CD8-positive, alpha-beta T cell (primary cell): ENCODE measurements at regions of chr3 and their contacts with region 1.

Region 1: DNA sequence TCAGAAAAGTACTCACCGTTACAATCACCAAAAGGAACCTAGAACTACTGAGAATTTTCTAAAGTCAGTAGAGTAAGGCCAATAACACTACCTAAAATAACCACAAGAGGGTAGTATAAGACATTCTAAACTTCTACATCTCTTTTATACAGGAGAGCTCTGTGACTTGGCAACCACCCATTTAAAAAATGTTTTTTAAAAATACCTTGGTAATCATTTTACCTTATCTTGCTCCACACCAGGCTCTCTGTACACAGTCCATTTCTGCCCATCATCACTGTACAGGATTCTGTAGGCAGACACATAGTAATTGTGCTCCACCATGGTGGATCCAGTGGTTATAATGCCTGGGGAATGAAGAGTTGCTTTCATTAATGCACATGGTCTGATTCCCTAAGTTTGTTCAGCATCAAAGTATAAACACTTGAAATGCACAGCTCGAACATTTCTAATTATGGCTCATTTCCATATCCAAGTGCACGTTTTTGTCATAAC is 54.5 kb downstream of the ST3GAL6 start:
- DNase-seq: peak in 2 of 9 experiments; percentile 34 to 51
- ATAC-seq: peak; percentile 78
- H3K4me3 ChIP-seq: no peak overlapping the region
- H3K4me3 Mint-ChIP-seq: no peak overlapping the region
- H3K27ac ChIP-seq: no peak overlapping the region
- H3K27ac Mint-ChIP-seq: no peak overlapping the region
- H3K4me1 ChIP-seq: no peaks in the 10 kb centered on the region
- H3K4me1 Mint-ChIP-seq: no peaks in the 10 kb centered on the region
- H3K27me3 ChIP-seq: no peaks in the 10 kb centered on the region
- H3K27me3 Mint-ChIP-seq: no peaks in the 10 kb centered on the region
- CTCF ChIP-seq: peak; percentile 91

Region 2: DNA sequence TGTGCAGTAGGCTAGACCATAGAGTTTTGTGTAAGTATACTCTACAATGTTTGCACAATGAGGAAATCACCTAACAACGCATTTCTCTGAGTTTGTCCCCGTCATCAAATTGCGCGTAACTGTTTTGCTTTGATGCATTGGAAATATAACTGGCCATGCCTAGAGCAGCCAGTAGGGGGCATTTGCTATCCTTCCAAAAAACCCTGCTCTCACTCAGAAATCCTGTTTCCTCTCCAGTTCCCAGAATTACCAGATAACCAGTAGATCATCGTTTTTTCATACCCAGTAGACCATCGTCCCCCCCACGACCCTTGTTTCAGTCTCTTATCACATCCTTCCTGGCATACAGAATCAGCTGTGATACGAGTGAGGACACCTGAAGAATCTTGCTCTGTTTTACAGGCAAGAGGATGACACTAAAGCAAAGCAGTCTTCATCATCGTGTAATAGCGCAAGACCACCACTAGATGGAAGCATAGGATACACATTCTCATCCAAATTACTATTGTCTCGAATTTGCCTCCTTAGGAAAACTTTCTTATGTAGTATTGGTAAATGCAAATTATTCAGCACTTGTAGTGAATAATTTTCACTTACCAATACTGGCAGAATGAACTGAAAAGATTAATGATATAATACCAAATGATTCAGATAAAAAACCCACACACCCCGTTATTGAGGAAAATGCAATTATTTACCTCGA is 778.1 kb before region 1 on chr3:
- CTCF ChIA-PET with region 1: interaction called, 8 read pairs
- POLR2A ChIA-PET with region 1: no interaction called
- intact Hi-C with region 1: loop called in 1 of 2 experiments (anchors 1 kb)
- DNase-seq: peak; percentile 27 to 89 (median 66)
- ATAC-seq: peak; percentile 96
- H3K4me3 ChIP-seq: peak overlapping the region; percentile 37 to 38
- H3K4me3 Mint-ChIP-seq: peak overlapping the region; percentile 81
- H3K27ac ChIP-seq: peak overlapping the region; percentile 33 to 57
- H3K27ac Mint-ChIP-seq: peak overlapping the region; percentile 92
- H3K4me1 ChIP-seq: no peaks in the 10 kb centered on the region
- H3K4me1 Mint-ChIP-seq: peaks cover 7% of the 10 kb centered on the region
- H3K27me3 ChIP-seq: no peaks in the 10 kb centered on the region
- H3K27me3 Mint-ChIP-seq: peaks cover 22% of the 10 kb centered on the region
- CTCF ChIP-seq: peak; percentile 100

Region 3: GRCh38 chr3:98602078-98602678 is 215.4 kb before region 1 on chr3:
- CTCF ChIA-PET with region 1: interaction called, 3 read pairs
- POLR2A ChIA-PET with region 1: no interaction called
- intact Hi-C with region 1: loop called (anchors 1 to 2 kb)
- DNase-seq: peak in 2 of 9 experiments; percentile 29 to 52
- ATAC-seq: peak; percentile 56
- H3K4me3 ChIP-seq: no peak overlapping the region
- H3K4me3 Mint-ChIP-seq: no peak overlapping the region
- H3K27ac ChIP-seq: no peak overlapping the region
- H3K27ac Mint-ChIP-seq: no peak overlapping the region
- H3K4me1 ChIP-seq: no peaks in the 10 kb centered on the region
- H3K4me1 Mint-ChIP-seq: no peaks in the 10 kb centered on the region
- H3K27me3 ChIP-seq: peaks cover 0 to 6% of the 10 kb centered on the region in 2 experiments
- H3K27me3 Mint-ChIP-seq: peaks cover 14% of the 10 kb centered on the region
- CTCF ChIP-seq: peak; percentile 72

Region 4: GRCh38 chr3:98750276-98750919 is 67.2 kb before region 1 on chr3:
- CTCF ChIA-PET with region 1: no interaction called
- POLR2A ChIA-PET with region 1: no interaction called
- intact Hi-C with region 1: no loop called
- DNase-seq: no peak
- ATAC-seq: no peak
- H3K4me3 ChIP-seq: no peak overlapping the region
- H3K4me3 Mint-ChIP-seq: no peak overlapping the region
- H3K27ac ChIP-seq: no peak overlapping the region
- H3K27ac Mint-ChIP-seq: no peak overlapping the region
- H3K4me1 ChIP-seq: no peaks in the 10 kb centered on the region
- H3K4me1 Mint-ChIP-seq: no peaks in the 10 kb centered on the region
- H3K27me3 ChIP-seq: no peaks in the 10 kb centered on the region
- H3K27me3 Mint-ChIP-seq: peaks cover 10% of the 10 kb centered on the region
- CTCF ChIP-seq: no peak

Region 5: DNA sequence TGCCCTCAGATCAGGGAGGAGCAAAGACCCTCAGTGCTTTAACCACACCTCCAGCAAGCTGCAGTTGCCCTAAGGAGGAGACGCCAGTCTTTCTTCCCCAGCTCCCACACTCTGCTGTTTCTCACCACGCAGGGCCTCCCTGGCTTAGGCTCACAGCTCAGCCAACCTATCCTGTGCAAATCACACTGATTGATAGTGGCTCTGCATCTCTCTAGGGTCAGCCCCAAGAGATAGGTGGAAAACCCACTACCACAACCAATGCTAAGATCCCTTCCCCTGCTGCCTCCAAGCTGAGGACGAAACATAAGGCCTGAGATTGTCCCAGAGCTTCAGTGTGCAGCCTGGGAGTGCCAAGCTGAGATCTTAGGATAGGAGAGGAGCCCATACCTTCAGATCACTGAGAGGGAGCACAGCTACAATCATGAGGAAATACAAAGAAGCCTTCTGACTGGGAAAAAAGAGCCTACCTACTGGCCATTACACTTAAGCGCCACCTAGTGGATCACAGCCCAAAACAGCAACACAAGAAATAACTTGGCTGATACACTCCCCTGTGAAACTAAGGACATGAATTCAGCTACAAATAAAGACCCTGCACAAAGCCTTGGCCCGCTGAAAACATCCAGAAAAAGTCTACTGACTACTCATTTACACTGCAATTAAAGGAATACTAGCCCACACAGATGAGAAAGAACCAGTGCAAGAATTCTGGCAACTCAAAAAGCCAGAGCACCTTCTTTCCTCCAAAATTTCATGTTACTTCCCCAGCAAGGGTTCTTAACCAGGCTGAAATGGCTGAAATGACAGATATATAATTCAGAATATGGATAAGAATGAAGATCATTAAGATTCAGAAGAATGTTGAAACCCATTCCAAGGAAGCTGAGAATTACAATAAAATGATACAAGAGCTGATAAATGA is 355.4 kb after region 1 on chr3:
- CTCF ChIA-PET with region 1: interaction called, 9 read pairs
- POLR2A ChIA-PET with region 1: no interaction called
- intact Hi-C with region 1: loop called (anchors 2 to 5 kb)
- DNase-seq: peak in 1 of 9 experiments; percentile 37
- ATAC-seq: no peak
- H3K4me3 ChIP-seq: no peak overlapping the region
- H3K4me3 Mint-ChIP-seq: no peak overlapping the region
- H3K27ac ChIP-seq: no peak overlapping the region
- H3K27ac Mint-ChIP-seq: no peak overlapping the region
- H3K4me1 ChIP-seq: no peaks in the 10 kb centered on the region
- H3K4me1 Mint-ChIP-seq: no peaks in the 10 kb centered on the region
- H3K27me3 ChIP-seq: no peaks in the 10 kb centered on the region
- H3K27me3 Mint-ChIP-seq: no peaks in the 10 kb centered on the region
- CTCF ChIP-seq: peak; percentile 33

Region 6: GRCh38 chr3:99753268-99753975 is 935.8 kb after region 1 on chr3:
- CTCF ChIA-PET with region 1: interaction called, 4 read pairs
- POLR2A ChIA-PET with region 1: no interaction called
- intact Hi-C with region 1: loop called in 1 of 2 experiments (anchors 1 kb)
- DNase-seq: peak in 2 of 9 experiments; percentile 29 to 49
- ATAC-seq: peak; percentile 48
- H3K4me3 ChIP-seq: no peak overlapping the region
- H3K4me3 Mint-ChIP-seq: no peak overlapping the region
- H3K27ac ChIP-seq: no peak overlapping the region
- H3K27ac Mint-ChIP-seq: no peak overlapping the region
- H3K4me1 ChIP-seq: no peaks in the 10 kb centered on the region
- H3K4me1 Mint-ChIP-seq: peaks cover 2% of the 10 kb centered on the region
- H3K27me3 ChIP-seq: no peaks in the 10 kb centered on the region
- H3K27me3 Mint-ChIP-seq: peaks cover 23% of the 10 kb centered on the region
- CTCF ChIP-seq: peak; percentile 40

Region 7: DNA sequence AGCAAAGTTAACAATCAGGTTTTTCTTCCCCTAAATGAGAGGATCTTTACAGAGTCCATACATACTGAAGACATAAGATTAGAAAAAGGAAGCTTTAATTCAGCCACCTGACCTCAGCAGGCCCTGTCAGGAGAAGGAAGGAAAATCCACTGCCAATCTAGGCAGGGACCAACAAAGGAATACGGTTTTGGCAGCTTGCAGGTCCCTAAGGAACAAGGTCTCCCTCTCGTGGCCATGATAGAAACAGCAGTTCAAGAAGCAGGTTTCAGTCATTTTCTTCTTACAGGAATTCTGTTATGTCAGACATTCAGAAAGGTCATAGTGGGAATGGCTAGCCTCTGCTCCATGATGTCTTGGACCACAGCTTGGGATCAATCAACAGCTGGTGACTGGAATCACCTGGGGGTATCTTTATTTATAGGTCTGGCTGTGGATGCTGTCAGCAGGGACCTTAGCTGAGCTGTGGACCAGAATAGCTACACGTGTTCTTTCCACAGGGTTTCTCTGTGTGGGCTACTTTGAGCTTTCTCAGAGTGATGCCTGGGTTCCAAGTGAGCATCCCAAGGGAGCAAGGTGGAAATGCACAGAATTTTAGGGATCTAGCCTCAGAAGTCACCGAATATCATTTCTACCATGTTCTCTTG is 990.7 kb after region 1 on chr3:
- CTCF ChIA-PET with region 1: no interaction called
- POLR2A ChIA-PET with region 1: no interaction called
- intact Hi-C with region 1: loop called (anchors 1 to 5 kb)
- DNase-seq: peak in 6 of 9 experiments; percentile 10 to 72 (median 44)
- ATAC-seq: peak; percentile 72
- H3K4me3 ChIP-seq: no peak overlapping the region
- H3K4me3 Mint-ChIP-seq: no peak overlapping the region
- H3K27ac ChIP-seq: no peak overlapping the region
- H3K27ac Mint-ChIP-seq: no peak overlapping the region
- H3K4me1 ChIP-seq: no peaks in the 10 kb centered on the region
- H3K4me1 Mint-ChIP-seq: peaks cover 3% of the 10 kb centered on the region
- H3K27me3 ChIP-seq: no peaks in the 10 kb centered on the region
- H3K27me3 Mint-ChIP-seq: no peaks in the 10 kb centered on the region
- CTCF ChIP-seq: peak; percentile 76